GM12878 (cell line): ENCODE measurements at regions of chr3 and their contacts with region 1.

Region 1: DNA sequence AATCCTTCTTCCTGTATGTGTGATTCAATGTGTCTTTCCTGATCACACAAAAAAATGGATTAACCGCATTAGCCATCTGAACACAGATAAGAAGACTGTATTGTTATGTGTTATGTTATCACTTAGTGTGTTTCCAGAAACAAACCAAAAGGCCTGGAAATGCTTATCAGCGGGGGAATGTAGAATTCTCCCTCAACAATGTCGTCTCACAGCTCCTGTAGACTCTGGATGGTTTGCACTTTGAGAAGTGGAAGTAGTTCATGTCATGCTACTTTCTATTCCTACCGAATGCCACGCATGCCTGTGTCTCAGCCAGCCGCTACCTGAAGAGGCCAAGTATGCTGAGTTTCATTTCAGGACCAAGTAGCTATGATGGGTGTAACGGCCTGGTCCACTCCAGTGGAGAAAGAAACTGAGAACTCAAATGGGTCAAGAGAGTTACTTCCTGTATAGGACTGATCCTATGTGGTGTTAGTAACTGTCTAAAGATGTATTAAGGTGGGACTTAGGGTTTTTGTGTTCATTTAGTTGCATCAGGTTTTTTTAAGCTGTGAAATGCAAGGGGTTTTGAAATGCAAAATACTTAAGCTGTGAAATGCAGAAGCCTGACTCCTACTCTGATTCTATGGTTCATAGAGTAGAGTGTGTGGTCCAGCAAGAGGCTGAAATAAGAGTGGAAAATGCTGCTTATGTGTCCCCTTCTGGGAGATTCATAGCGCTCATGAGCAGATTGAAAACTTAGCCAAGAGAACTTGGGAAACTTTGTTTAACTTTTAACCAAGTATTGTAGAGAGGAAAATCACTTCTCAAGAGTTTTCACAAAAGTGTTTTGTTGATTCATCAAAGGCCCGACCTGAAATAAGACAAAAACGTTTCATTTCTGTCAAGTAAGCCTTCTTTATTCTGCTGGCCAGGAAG is 118.5 kb upstream of the LMOD3 start:
- DNase-seq: peak; percentile 48
- ATAC-seq: peak; percentile 79
- H3K4me3 ChIP-seq: no peak overlapping the region
- H3K27ac ChIP-seq: 0 out of 2 replicates have a peak overlapping the region, but pooled peaks have one; percentile 40
- H3K4me1 ChIP-seq: peaks cover 21% of the 10 kb centered on the region
- H3K27me3 ChIP-seq: no peaks in the 10 kb centered on the region
- CTCF ChIP-seq: no peak
- EP300 ChIP-seq: no peak
- POLR2A ChIP-seq: no peak
- RAD21 ChIP-seq: no peak

Region 2: GRCh38 chr3:67635257-67635656 is 1605.7 kb before region 1 on chr3:
- CTCF ChIA-PET with region 1: no interaction called
- POLR2A ChIA-PET with region 1: no interaction called
- RAD21 ChIA-PET with region 1: no interaction called
- SMC1A ChIA-PET with region 1: no interaction called
- in situ Hi-C with region 1: no loop called
- intact Hi-C with region 1: no loop called
- DNase-seq: no peak
- ATAC-seq: no peak
- H3K4me3 ChIP-seq: no peak overlapping the region
- H3K27ac ChIP-seq: no peak overlapping the region
- H3K4me1 ChIP-seq: no peaks in the 10 kb centered on the region
- H3K27me3 ChIP-seq: no peaks in the 10 kb centered on the region
- CTCF ChIP-seq: no peak
- EP300 ChIP-seq: no peak
- POLR2A ChIP-seq: no peak
- RAD21 ChIP-seq: no peak

Region 3: DNA sequence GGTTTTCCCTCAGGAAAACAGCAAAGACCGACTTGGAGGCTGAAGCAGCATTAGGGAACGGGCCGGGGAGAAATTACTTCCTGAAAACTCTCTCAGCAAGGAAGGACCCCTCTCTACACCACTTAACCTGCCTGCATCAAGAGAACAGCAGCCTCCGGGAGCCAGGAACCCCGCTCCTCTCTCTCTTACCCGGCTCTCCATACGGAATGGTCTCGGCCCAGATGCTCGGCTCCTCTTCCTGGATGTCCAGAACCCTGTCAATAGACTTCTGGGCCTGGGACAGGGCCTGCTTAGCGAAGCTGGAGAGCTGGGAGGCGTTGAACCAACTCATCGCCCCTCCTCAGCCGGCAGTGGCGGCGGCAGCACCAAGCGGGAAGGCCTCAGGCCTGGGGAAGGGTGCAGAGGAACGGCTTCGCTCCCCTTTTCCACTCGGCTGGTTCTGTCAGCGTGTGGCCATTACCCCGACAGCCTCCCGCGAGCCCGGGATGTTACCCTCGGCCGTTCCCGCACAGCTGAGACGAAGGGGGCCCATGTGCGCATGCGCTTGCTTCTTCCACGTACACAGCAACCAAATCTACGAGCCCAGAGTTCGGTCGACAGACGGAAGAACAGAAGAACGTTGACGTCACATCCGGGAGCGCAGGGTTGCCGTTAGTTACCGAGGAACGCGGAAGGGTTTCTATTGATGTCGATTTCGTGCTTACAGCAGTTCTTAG is 189.0 kb before region 1 on chr3 and contains the start of gene TMF1:
- CTCF ChIA-PET with region 1: no interaction called
- POLR2A ChIA-PET with region 1: interaction called, 12 read pairs
- RAD21 ChIA-PET with region 1: no interaction called
- SMC1A ChIA-PET with region 1: no interaction called
- in situ Hi-C with region 1: no loop called
- intact Hi-C with region 1: no loop called
- DNase-seq: peak; percentile 97
- ATAC-seq: peak; percentile 92
- H3K4me3 ChIP-seq: peak within 1 kb of the TSS; percentile 98
- H3K27ac ChIP-seq: peak within 1 kb of the TSS; percentile 73
- H3K4me1 ChIP-seq: peaks cover 3% of the 10 kb centered on the region; the same call in 1 of the 2 replicates
- H3K27me3 ChIP-seq: no peaks in the 10 kb centered on the region
- CTCF ChIP-seq: no peak
- EP300 ChIP-seq: no peak
- POLR2A ChIP-seq: peak; percentile 89
- RAD21 ChIP-seq: no peak
- polyA plus RNA-seq, gene TMF1: 7.1 to 7.9 TPM

Region 4: GRCh38 chr3:69174871-69175737 is 65.8 kb before region 1 on chr3:
- CTCF ChIA-PET with region 1: interaction called, 12 read pairs
- POLR2A ChIA-PET with region 1: no interaction called
- RAD21 ChIA-PET with region 1: interaction called, 12 read pairs
- SMC1A ChIA-PET with region 1: interaction called, 9 read pairs
- in situ Hi-C with region 1: no loop called
- intact Hi-C with region 1: no loop called
- DNase-seq: no peak
- ATAC-seq: no peak
- H3K4me3 ChIP-seq: no peak overlapping the region
- H3K27ac ChIP-seq: no peak overlapping the region
- H3K4me1 ChIP-seq: no peaks in the 10 kb centered on the region
- H3K27me3 ChIP-seq: no peaks in the 10 kb centered on the region
- CTCF ChIP-seq: no peak
- EP300 ChIP-seq: no peak
- POLR2A ChIP-seq: no peak
- RAD21 ChIP-seq: no peak

Region 5: DNA sequence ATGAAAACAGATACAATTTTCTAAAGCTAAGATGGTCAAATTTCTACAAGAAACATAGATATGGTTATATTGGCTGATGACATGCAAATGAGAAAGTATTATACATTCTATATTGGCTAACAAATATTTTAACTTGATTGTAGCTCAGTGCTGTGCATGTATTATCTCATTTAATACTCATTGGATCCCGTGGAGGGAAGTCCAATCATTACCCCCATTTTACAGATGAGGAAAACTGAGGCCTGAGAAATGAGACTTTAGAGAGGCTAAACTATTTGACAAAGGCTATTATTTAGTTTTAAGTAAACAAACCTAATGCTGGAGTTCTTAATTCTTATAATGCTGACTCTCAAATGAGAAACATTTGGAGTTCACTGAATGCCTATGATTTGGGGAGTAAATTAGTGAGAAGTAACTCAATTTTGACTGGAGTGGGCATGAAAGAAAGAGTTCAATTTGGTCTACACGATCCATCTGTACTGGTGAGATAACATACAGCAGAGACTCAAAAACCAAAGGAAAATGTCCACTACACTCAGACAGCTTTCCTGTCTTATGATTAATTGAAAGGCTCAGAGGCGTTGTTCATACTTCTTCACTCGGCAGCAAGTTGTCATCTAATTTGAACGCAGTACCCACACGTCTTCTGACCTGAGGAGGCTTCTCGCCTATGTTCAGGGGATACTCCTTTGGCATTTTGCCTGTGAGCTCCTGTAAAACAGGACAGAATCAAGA is 46.3 kb before region 1 on chr3:
- CTCF ChIA-PET with region 1: interaction called, 23 read pairs
- POLR2A ChIA-PET with region 1: interaction called, 4 read pairs
- RAD21 ChIA-PET with region 1: interaction called, 7 read pairs
- SMC1A ChIA-PET with region 1: interaction called, 12 read pairs
- in situ Hi-C with region 1: no loop called
- intact Hi-C with region 1: no loop called
- DNase-seq: no peak
- ATAC-seq: no peak
- H3K4me3 ChIP-seq: no peak overlapping the region
- H3K27ac ChIP-seq: no peak overlapping the region
- H3K4me1 ChIP-seq: no peaks in the 10 kb centered on the region
- H3K27me3 ChIP-seq: no peaks in the 10 kb centered on the region
- CTCF ChIP-seq: no peak
- EP300 ChIP-seq: no peak
- POLR2A ChIP-seq: no peak
- RAD21 ChIP-seq: no peak

Region 6: DNA sequence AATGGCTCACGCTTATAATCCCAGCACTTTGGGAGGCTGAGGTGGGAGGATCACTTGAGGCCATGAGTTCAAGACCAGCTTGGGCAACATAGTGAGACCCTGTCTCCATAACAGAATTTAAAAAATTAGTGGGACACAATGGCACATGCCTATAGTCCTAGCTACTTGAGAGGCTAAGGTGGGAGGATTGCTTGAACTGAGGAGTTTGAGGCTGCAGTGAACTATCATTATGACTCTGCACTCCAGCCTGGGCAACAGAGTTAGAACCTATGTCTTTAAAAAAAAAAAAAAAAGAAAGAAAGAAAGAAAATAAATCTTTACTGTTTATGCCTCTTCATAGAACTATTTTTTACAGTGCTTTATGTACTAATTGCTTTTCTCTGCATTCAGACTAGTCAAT is 33.9 kb before region 1 on chr3:
- CTCF ChIA-PET with region 1: interaction called, 23 read pairs
- POLR2A ChIA-PET with region 1: no interaction called
- RAD21 ChIA-PET with region 1: interaction called, 8 read pairs
- SMC1A ChIA-PET with region 1: interaction called, 23 read pairs
- in situ Hi-C with region 1: no loop called
- intact Hi-C with region 1: loop called (anchors 5 kb)
- DNase-seq: no peak
- ATAC-seq: peak; percentile 9; the same call in 1 of the 3 replicates
- H3K4me3 ChIP-seq: no peak overlapping the region
- H3K27ac ChIP-seq: no peak overlapping the region
- H3K4me1 ChIP-seq: peaks cover 15% of the 10 kb centered on the region
- H3K27me3 ChIP-seq: no peaks in the 10 kb centered on the region
- CTCF ChIP-seq: no peak
- EP300 ChIP-seq: no peak
- POLR2A ChIP-seq: no peak
- RAD21 ChIP-seq: no peak

Region 7: DNA sequence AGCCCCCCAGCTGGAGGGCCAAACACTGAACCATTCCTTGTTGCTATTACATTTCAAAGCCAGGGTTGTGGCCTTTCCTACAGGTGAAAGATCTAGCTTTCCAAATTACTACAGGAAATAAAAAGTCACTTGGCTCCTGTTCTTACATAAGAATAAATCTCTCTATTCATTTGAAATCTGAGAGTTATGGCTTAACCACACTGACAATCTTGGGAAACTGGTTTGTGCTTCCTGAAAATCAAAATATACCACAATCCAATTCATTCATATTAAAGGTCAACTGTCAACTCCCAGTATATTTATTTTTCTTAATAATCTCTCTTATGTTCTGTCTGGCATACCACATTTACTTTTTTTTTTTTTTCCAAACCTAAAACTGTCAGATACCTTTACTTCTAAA is 14.8 kb before region 1 on chr3:
- CTCF ChIA-PET with region 1: interaction called, 10 read pairs
- POLR2A ChIA-PET with region 1: no interaction called
- RAD21 ChIA-PET with region 1: interaction called, 4 read pairs
- SMC1A ChIA-PET with region 1: interaction called, 11 read pairs
- in situ Hi-C with region 1: no loop called
- intact Hi-C with region 1: no loop called
- DNase-seq: no peak
- ATAC-seq: no peak
- H3K4me3 ChIP-seq: no peak overlapping the region
- H3K27ac ChIP-seq: no peak overlapping the region
- H3K4me1 ChIP-seq: no peaks in the 10 kb centered on the region
- H3K27me3 ChIP-seq: no peaks in the 10 kb centered on the region
- CTCF ChIP-seq: no peak
- EP300 ChIP-seq: no peak
- POLR2A ChIP-seq: no peak
- RAD21 ChIP-seq: no peak

Region 8: GRCh38 chr3:69299361-69299760 is 58.5 kb after region 1 on chr3:
- CTCF ChIA-PET with region 1: interaction called, 57 read pairs
- POLR2A ChIA-PET with region 1: interaction called, 4 read pairs
- RAD21 ChIA-PET with region 1: interaction called, 53 read pairs
- SMC1A ChIA-PET with region 1: interaction called, 98 read pairs
- in situ Hi-C with region 1: no loop called
- intact Hi-C with region 1: no loop called
- DNase-seq: no peak
- ATAC-seq: no peak
- H3K4me3 ChIP-seq: no peak overlapping the region
- H3K27ac ChIP-seq: no peak overlapping the region
- H3K4me1 ChIP-seq: peaks cover 3% of the 10 kb centered on the region
- H3K27me3 ChIP-seq: no peaks in the 10 kb centered on the region
- CTCF ChIP-seq: no peak
- EP300 ChIP-seq: no peak
- POLR2A ChIP-seq: no peak
- RAD21 ChIP-seq: no peak